CD8-positive, alpha-beta T cell (primary cell): ENCODE measurements at regions of chr4 and their contacts with region 1.

Region 1: GRCh38 chr4:38993694-38994093 is 38.5 kb downstream of the TMEM156 start:
- DNase-seq: no peak
- ATAC-seq: no peak
- H3K4me3 ChIP-seq: no peak overlapping the region
- H3K4me3 Mint-ChIP-seq: no peak overlapping the region
- H3K27ac ChIP-seq: no peak overlapping the region
- H3K27ac Mint-ChIP-seq: no peak overlapping the region
- H3K4me1 ChIP-seq: no peaks in the 10 kb centered on the region
- H3K4me1 Mint-ChIP-seq: no peaks in the 10 kb centered on the region
- H3K27me3 ChIP-seq: no peaks in the 10 kb centered on the region
- H3K27me3 Mint-ChIP-seq: no peaks in the 10 kb centered on the region
- CTCF ChIP-seq: no peak

Region 2: DNA sequence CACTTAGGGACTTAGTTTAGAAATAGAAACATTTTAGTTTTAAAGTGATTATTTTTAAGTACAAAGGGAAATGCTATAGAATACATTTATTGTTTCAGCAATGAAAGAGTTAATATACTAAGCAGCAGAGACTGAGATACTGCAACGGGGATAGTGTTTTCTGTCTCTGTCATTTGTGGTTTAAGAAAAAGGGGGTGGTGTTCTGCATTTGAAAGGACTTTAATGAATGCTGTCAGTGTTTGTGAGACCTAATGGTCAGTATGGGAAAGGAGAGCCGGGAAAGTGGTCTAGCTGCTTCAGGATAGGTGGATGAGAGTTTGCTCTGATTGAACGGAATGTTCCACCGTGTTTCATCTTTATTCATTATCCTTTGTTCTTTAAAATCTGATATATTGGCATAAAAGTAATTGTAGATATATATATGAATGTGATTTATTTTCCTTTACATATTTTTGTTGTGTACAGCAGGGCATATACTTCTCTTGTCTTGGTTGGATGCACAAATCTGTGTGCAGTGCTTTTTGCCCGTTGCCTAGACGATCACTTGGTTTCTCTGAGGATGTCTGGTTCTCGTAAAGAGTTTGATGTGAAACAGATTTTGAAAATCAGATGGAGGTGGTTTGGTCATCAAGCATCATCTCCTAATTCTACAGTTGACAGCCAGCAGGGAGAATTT is 68.5 kb after region 1 on chr4 and contains the start of gene KLHL5:
- CTCF ChIA-PET with region 1: no interaction called
- POLR2A ChIA-PET with region 1: no interaction called
- intact Hi-C with region 1: loop called in 1 of 2 experiments (anchors 5 kb)
- DNase-seq: no peak
- ATAC-seq: no peak
- H3K4me3 ChIP-seq: no peak within 1 kb of the TSS
- H3K4me3 Mint-ChIP-seq: no peak within 1 kb of the TSS
- H3K27ac ChIP-seq: no peak within 1 kb of the TSS
- H3K27ac Mint-ChIP-seq: peak within 1 kb of the TSS; percentile 4
- H3K4me1 ChIP-seq: no peaks in the 10 kb centered on the region
- H3K4me1 Mint-ChIP-seq: peaks cover 18% of the 10 kb centered on the region
- H3K27me3 ChIP-seq: no peaks in the 10 kb centered on the region
- H3K27me3 Mint-ChIP-seq: no peaks in the 10 kb centered on the region
- CTCF ChIP-seq: no peak
- total RNA-seq, gene KLHL5: 11.8 to 13.2 TPM

Region 3: DNA sequence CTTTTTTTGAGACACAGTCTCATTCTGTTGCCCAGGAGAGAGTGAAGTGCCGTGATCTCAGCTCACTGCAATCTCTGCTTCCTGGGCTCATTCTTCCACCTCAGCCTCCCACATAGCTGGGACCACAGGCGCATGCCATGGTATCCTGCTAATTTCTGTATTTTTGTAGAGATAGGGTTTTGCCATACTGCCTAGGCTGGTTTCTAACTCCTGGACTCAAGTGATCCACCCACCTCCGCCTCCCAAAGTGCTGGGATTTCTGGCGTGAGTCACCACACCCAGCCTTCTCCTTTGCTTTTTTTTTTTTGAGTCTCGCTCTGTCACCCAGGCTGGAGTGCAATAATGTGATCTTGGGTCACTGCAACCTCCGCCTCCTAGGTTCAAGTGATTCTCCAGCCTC is 890.0 kb after region 1 on chr4:
- CTCF ChIA-PET with region 1: no interaction called
- POLR2A ChIA-PET with region 1: no interaction called
- intact Hi-C with region 1: no loop called
- DNase-seq: no peak
- ATAC-seq: no peak
- H3K4me3 ChIP-seq: no peak overlapping the region
- H3K4me3 Mint-ChIP-seq: no peak overlapping the region
- H3K27ac ChIP-seq: no peak overlapping the region
- H3K27ac Mint-ChIP-seq: no peak overlapping the region
- H3K4me1 ChIP-seq: no peaks in the 10 kb centered on the region
- H3K4me1 Mint-ChIP-seq: peaks cover 7% of the 10 kb centered on the region
- H3K27me3 ChIP-seq: no peaks in the 10 kb centered on the region
- H3K27me3 Mint-ChIP-seq: no peaks in the 10 kb centered on the region
- CTCF ChIP-seq: no peak